HepG2 (cell line): ENCODE measurements at regions of chr1 and their contacts with region 1.

Region 1: DNA sequence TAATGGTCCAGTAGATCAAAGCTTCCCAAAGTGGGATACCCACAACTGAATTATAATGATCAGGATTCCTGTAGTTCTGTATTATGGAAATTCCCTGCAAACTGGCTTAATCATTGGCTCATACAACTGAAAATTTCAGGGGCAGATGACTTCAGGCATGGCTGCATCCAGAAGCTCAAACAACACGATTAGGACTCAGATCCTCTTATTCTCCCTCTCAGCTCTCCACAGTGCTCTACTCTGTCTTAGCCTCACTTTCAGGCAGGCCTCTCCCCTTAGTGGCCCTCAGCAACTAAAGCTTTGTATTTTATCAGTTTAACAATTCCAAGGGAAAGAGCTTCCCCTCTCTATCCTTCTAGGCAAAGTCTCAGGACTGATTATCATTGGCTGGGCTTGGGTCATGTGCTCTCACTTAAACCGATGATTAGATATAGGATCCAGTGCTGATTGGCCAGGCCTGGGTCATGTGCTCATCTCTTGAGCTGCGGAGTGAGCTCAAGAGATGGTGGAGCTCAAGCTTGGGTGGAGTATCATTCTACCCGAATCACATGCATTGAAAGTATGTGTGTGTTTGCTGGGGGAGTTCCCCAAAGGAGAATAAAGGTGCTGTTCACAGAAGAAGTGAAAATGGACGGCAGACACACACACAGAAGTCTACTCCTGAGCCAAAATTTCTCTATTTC is 57.9 kb upstream of the RUNX3 start:
- DNase-seq: no peak
- ATAC-seq: no peak
- H3K4me3 ChIP-seq: no peak overlapping the region
- H3K27ac ChIP-seq: no peak overlapping the region
- H3K4me1 ChIP-seq: no peaks in the 10 kb centered on the region
- H3K27me3 ChIP-seq: peaks cover 2 to 56% of the 10 kb centered on the region in 2 experiments; a peak in 3 of 5 replicates
- CTCF ChIP-seq: no peak
- EP300 ChIP-seq: no peak
- POLR2A ChIP-seq: no peak
- RAD21 ChIP-seq: no peak

Region 2: DNA sequence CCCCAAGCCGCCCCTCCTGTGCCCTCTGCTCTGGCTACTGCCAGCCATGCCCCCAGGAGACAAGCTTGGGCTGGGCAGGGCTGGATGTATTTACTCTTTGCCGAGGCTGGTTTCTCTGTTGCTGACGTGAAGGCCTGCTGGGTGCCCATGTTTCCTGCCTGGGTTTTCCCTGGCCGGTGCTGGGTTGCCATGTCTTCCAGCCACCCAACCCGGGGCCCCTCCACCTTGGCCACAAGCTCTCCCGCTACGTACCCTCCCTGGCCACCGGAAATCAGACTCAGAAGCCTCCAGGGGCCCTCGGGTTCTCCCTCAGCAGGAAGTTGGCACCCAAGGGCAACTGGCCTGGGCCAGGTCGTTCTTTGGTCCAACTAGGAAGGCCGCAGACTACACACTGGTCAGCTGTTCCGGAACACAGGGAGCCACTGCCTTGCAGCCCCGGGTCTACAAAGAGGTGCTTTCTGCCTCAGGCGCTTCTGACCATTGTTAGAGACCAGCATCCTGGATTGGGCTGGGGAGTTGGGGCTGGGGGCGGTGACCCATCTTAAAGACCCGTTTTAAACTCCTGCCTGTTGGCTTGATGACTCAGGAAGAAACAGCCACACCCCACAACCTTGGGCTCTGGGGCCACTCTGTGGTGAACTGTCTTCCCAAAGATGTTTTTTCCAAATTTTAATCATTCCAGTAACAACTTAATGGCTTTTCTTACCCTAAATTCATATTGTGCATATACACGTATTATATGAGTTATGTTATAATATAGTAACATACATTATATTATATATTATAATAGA is 13.3 kb after region 1 on chr1:
- CTCF ChIA-PET with region 1: no interaction called
- POLR2A ChIA-PET with region 1: no interaction called
- in situ Hi-C with region 1: no loop called
- intact Hi-C with region 1: loop called (anchors 2 kb)
- DNase-seq: no peak
- ATAC-seq: no peak
- H3K4me3 ChIP-seq: no peak overlapping the region
- H3K27ac ChIP-seq: no peak overlapping the region
- H3K4me1 ChIP-seq: peaks cover 17% of the 10 kb centered on the region
- H3K27me3 ChIP-seq: peaks cover 2 to 15% of the 10 kb centered on the region in 2 experiments; a peak in 2 of 5 replicates
- CTCF ChIP-seq: no peak
- EP300 ChIP-seq: no peak
- POLR2A ChIP-seq: no peak
- RAD21 ChIP-seq: no peak